HepG2 (cell line): ENCODE measurements at regions of chr14 and their contacts with region 1.

Region 1: GRCh38 chr14:58244556-58245387 is at the start of gene PSMA3:
- DNase-seq: peak; percentile 96
- ATAC-seq: peak; percentile 94
- H3K4me3 ChIP-seq: peak within 1 kb of the TSS; percentile 66 to 100 (median 93)
- H3K27ac ChIP-seq: peak within 1 kb of the TSS; percentile 99
- H3K4me1 ChIP-seq: peaks cover 39% of the 10 kb centered on the region
- H3K27me3 ChIP-seq: no peaks in the 10 kb centered on the region; a peak in 1 of 5 replicates
- CTCF ChIP-seq: no peak
- EP300 ChIP-seq: no peak
- POLR2A ChIP-seq: peak; percentile 77 to 95
- RAD21 ChIP-seq: no peak
- total RNA-seq, gene PSMA3: 275 and 443 TPM in 2 replicates

Region 2: GRCh38 chr14:58199726-58200479 is 44.9 kb before region 1 on chr14 and contains the start of gene ACTR10:
- CTCF ChIA-PET with region 1: no interaction called
- POLR2A ChIA-PET with region 1: interaction called, 7 read pairs
- in situ Hi-C with region 1: no loop called
- intact Hi-C with region 1: loop called (anchors 1 kb)
- DNase-seq: peak; percentile 75
- ATAC-seq: peak; percentile 98
- H3K4me3 ChIP-seq: peak within 1 kb of the TSS; percentile 93 to 98 (median 97)
- H3K27ac ChIP-seq: peak within 1 kb of the TSS; percentile 72
- H3K4me1 ChIP-seq: peaks cover 24% of the 10 kb centered on the region
- H3K27me3 ChIP-seq: no peaks in the 10 kb centered on the region; a peak in 1 of 5 replicates
- CTCF ChIP-seq: no peak
- EP300 ChIP-seq: no peak
- POLR2A ChIP-seq: peak; percentile 63 to 76
- RAD21 ChIP-seq: peak; percentile 34
- total RNA-seq, gene ACTR10: 41.3 and 49.4 TPM in 2 replicates

Region 3: GRCh38 chr14:58258156-58258555 is 13.4 kb after region 1 on chr14:
- CTCF ChIA-PET with region 1: no interaction called
- POLR2A ChIA-PET with region 1: interaction called, 16 read pairs
- in situ Hi-C with region 1: no loop called
- intact Hi-C with region 1: no loop called
- DNase-seq: no peak
- ATAC-seq: peak; percentile 69
- H3K4me3 ChIP-seq: no peak overlapping the region
- H3K27ac ChIP-seq: no peak overlapping the region
- H3K4me1 ChIP-seq: no peaks in the 10 kb centered on the region
- H3K27me3 ChIP-seq: no peaks in the 10 kb centered on the region
- CTCF ChIP-seq: no peak
- EP300 ChIP-seq: no peak
- POLR2A ChIP-seq: no peak
- RAD21 ChIP-seq: no peak